ENCODE measurements at regions of chr15 and their contacts with region 1.

Region 1: DNA sequence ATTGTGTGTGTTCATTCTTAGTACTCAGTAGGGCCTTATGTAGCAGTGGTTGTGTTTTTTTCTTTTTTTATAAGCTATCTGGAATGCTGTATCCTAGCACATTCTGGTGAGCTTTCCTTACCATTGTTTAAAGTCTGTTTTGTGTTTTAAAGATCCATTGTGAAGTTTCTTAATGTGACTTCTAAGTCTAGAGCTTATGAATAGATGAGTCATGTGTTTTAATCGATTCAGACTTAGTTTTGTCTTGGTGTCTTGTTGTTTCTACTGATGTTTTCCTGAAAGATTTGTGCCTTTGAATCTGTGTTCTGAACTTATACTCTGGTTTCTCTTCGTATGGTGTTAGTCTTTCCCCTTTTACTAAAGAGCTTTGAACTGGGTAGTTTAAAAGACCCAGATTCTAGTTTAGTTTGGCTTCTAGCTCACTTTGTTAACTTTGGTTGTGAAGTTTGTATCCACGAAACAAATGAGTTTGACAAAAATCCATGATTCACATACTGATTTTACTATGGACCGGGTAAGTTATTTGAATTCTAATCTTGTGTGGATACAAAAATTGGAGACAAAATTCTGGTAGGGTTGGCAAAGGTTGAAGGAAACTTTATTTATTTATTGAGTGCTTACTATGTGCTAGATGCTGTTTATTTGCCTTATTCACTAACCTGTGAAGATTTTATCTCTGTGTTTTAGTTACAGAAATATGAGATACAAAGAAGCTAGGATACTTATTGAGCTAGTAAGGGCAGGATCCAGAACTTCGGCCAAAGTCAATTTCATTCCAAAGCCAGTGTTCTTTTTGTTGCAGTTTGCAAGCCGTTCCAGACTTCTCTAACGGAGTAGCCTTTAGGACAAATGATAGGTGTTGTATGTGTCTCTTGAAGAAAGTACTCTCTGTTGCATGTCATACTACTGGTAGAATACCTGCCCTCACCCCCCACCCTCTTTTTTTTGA is 24.8 kb downstream of the AKAP13 start:
- DNase-seq: no peak
- H3K27ac ChIP-seq: no peak overlapping the region
- CTCF ChIP-seq: no peak

Region 2: GRCh38 chr15:85380812-85381642 is 24.2 kb before region 1 on chr15:
- CTCF ChIA-PET with region 1: interaction called, 10 read pairs
- POLR2A ChIA-PET with region 1: interaction called, 15 read pairs
- DNase-seq: peak; percentile 39
- H3K27ac ChIP-seq: peak overlapping the region; percentile 95
- CTCF ChIP-seq: no peak